Gastrocnemius medialis (tissue), 4 donors: ENCODE measurements at regions of chr18 and their contacts with region 1.

Region 1: DNA sequence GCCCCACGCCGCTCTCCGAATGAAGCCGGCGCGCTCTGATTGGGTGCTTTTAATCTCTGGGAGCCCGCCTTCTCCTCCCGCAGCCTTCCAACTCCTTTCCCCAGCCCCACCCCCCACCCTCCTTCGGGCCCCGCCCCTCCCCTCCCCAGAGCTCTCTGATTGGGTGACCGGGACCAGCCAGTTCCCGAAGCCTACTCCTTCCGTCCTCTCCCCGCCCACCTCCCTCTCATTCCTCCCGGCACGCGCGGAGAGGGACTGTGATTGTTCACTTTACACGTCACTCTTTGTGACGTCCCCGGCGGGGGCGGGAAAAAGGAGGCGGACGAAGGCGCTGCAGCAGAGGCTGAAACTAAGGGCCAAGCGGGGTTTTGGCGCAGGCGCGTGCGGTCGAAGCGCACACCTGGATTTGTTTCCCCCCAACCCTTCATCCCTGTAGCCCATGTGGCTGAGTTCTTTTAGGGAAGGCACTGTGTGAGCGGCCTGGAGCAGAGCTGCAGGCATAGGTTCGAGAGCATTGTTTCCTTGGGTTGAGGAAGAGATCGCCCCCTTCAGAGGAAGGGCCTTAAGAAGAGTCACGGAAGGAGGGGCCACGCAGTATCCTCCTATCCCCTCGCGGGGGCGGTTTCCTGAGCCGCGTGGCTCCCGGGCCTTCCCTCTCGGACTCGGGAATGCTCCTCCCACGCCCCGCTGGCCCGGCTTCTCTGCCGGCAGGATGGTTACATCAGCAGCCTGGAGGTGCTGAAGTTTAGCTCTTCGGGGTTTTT is at the start of gene MEX3C:
- DNase-seq: peak; percentile 99
- ATAC-seq: peak; percentile 85
- H3K4me3 ChIP-seq: peak within 1 kb of the TSS; percentile 80 to 94 (median 89)
- H3K27ac ChIP-seq: peak within 1 kb of the TSS; percentile 94 to 98 (median 95)
- H3K4me1 ChIP-seq: peaks cover 26 to 27% of the 10 kb centered on the region in 2 donors
- H3K27me3 ChIP-seq: no peaks in the 10 kb centered on the region
- CTCF ChIP-seq: peak in 3 of 5 experiments; percentile 15 to 48 (median 43)
- POLR2A ChIP-seq: peak in 1 of 2 donors; percentile 70
- total RNA-seq, gene MEX3C: 8.8 to 14.9 (median 12.4) TPM

Region 2: DNA sequence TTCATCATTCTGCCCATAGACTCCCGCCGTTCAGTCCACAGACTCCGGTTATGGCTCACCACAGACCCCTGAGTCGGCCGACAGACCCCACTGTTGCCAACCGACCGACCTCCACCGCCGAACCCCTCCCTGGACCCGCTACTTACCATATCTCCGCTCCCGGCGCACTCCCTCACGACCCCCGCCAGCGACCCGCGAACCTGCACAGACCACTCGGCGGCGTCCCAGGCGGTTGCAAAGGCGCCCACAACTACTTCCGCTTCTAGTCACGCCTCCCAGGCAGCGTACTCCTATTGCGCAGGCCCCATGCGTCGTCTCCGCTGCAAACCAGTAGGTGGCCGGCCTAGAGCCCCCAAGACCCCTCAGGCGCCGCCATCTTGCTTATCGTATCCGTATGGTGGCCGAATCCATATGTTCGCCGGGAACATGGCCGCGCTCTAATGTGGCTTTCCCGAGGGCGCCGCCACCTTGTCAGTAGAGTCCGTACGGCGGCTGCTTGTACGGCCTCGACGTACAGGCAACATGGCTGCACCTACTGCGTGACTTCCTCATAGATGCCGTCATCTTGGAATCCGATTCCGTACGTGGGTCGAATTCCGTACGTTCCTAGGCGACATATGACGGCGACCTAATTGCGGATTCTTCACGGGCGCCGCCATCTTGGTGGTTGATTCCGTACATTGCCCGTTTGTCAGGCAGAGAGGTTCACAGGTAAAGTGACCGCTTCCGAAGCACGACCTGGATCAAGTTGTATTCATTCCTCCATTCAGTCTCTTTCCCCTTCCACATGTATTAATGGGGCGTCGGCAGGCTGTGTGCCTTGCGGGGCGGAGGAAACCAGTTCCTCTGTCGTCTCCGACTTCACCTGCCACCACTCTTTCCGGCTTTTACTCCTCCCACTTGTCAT is 910.1 kb before region 1 on chr18 and contains the start of gene CXXC1:
- in situ Hi-C with region 1: loop called in 1 of 4 experiments (anchors 25 kb)
- intact Hi-C with region 1: loop called (anchors 10 kb)
- DNase-seq: peak; percentile 95
- ATAC-seq: peak; percentile 98
- H3K4me3 ChIP-seq: peak within 1 kb of the TSS; percentile 73 to 97 (median 84)
- H3K27ac ChIP-seq: peak within 1 kb of the TSS; percentile 82 to 93 (median 91)
- H3K4me1 ChIP-seq: no peaks in the 10 kb centered on the region
- H3K27me3 ChIP-seq: no peaks in the 10 kb centered on the region
- CTCF ChIP-seq: peak; percentile 46 to 75 (median 61)
- POLR2A ChIP-seq: peak in 1 of 2 donors; percentile 46
- total RNA-seq, gene CXXC1: 21.1 to 32.0 (median 27.3) TPM

Region 3: GRCh38 chr18:50967714-50968661 is 229.9 kb before region 1 on chr18 and contains the start of gene ELAC1:
- in situ Hi-C with region 1: loop called in 1 of 4 experiments (anchors 25 kb)
- intact Hi-C with region 1: loop called (anchors 1 kb)
- DNase-seq: peak; percentile 66 to 86
- ATAC-seq: peak; percentile 78 to 87
- H3K4me3 ChIP-seq: peak within 1 kb of the TSS; percentile 78 to 89 (median 80)
- H3K27ac ChIP-seq: peak within 1 kb of the TSS; percentile 92 to 99 (median 96)
- H3K4me1 ChIP-seq: peaks cover 30 to 33% of the 10 kb centered on the region in 2 donors
- H3K27me3 ChIP-seq: no peaks in the 10 kb centered on the region
- CTCF ChIP-seq: no peak
- POLR2A ChIP-seq: peak; percentile 96 to 99
- total RNA-seq, gene ELAC1: 1.6 to 13.7 (median 4.0) TPM

Region 4: GRCh38 chr18:51074605-51075004 is 123.2 kb before region 1 on chr18:
- in situ Hi-C with region 1: no loop called
- intact Hi-C with region 1: loop called (anchors 5 kb)
- DNase-seq: no peak
- ATAC-seq: no peak
- H3K4me3 ChIP-seq: no peak overlapping the region
- H3K27ac ChIP-seq: no peak overlapping the region
- H3K4me1 ChIP-seq: peaks cover 21 to 39% of the 10 kb centered on the region in 2 donors
- H3K27me3 ChIP-seq: no peaks in the 10 kb centered on the region
- CTCF ChIP-seq: no peak
- POLR2A ChIP-seq: no peak

Region 5: GRCh38 chr18:51088410-51088809 is 109.4 kb before region 1 on chr18:
- in situ Hi-C with region 1: no loop called
- intact Hi-C with region 1: no loop called
- DNase-seq: no peak
- ATAC-seq: no peak
- H3K4me3 ChIP-seq: no peak overlapping the region
- H3K27ac ChIP-seq: no peak overlapping the region
- H3K4me1 ChIP-seq: no peaks in the 10 kb centered on the region
- H3K27me3 ChIP-seq: no peaks in the 10 kb centered on the region
- CTCF ChIP-seq: no peak
- POLR2A ChIP-seq: no peak

Region 6: DNA sequence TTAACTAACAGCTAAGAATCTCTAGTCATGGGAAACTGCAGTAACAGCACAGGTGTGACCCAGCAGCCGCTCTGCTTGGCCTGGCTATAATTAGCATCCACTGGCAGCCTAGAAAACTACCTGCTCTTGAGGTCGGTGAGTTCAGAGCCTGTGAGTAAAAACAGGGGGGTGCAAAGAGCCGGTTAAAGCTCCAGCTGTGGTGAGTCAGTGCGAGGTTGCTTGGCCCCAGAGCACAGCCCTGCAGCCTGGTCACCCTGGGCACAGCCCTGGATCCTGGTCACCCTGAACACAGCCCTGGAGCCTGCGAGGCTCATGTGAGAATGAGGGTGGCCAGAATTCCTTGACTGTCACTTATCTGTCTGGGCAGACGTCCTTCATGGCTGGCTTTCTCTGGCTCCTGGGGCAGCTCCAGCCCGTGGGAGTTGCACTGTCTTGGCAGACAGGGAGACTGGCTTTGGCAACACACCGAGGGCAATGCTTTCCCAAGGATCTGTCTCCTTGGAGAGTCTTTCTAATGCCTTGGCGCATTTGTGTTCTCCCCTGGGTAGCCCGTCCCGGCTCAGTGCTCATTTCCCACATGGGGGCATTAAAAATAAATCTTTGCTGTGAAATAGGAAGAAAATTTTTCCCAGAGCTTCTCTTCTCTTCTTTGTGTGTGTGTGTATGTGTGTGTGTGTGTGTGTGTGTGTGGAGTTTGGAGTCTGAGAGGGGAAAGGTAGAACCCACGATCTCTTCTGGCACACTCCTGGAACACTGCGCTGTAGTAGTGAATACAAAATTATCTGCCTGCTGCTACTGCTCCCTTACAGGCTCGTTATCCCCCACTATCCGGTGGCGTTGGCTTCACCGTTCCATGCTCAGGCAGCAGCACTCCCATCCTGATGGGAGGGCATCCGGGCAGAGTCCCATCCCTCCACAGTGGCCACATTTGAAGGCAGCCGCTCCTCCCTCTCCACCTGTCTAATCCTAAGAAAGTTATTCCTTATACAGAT is 249.8 kb after region 1 on chr18:
- in situ Hi-C with region 1: no loop called
- intact Hi-C with region 1: loop called (anchors 5 kb)
- DNase-seq: peak; percentile 47 to 76
- ATAC-seq: peak; percentile 90
- H3K4me3 ChIP-seq: no peak overlapping the region
- H3K27ac ChIP-seq: peak overlapping the region; percentile 42 to 74 (median 56)
- H3K4me1 ChIP-seq: peaks cover 9 to 18% of the 10 kb centered on the region in 2 donors
- H3K27me3 ChIP-seq: no peaks in the 10 kb centered on the region
- CTCF ChIP-seq: no peak
- POLR2A ChIP-seq: no peak